Activated CD8-positive, alpha-beta T cell treated with anti-CD3 and anti-CD28 coated beads, Interleukin-2, amount 10 ng/mL, durations not matched to agents 7 days and 5 days (primary cell): ENCODE measurements at regions of chr9 and their contacts with region 1.

Region 1: DNA sequence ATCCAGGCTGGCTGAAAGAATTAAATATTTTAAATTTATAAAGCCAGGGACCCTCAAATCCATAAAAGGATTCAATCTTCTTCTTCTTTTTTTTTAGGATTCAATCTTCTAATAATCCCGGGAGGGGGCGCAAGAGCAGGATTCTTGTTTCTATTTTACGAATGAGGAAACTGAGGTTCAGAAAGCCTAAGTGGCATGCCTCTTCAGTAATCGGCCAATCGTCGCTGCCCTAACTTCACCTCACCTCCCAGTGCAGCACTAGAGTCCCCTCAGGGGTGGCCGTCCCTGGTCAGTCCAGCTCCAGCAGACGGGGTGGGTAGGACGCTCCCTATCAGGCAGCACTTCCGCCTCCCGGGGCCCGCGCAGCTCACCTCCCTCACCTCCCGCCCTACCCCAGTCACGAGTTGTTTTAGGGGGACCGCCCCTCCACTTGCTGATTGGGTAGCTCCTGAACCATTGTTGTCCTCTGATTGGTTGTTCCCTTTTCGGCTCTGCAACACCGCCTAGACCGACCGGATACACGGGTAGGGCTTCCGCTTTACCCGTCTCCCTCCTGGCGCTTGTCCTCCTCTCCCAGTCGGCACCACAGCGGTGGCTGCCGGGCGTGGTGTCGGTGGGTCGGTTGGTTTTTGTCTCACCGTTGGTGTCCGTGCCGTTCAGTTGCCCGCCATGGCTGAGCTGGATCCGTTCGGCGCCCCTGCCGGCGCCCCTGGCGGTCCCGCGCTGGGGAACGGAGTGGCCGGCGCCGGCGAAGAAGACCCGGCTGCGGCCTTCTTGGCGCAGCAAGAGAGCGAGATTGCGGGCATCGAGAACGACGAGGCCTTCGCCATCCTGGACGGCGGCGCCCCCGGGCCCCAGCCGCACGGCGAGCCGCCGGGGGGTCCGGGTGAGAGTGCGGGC is at the start of gene CLTA:
- DNase-seq: peak; percentile 98
- ATAC-seq: peak; percentile 98
- H3K4me3 Mint-ChIP-seq: peak within 1 kb of the TSS; percentile 93
- H3K27ac Mint-ChIP-seq: peak within 1 kb of the TSS; percentile 91
- H3K4me1 Mint-ChIP-seq: peaks cover 55% of the 10 kb centered on the region
- H3K27me3 Mint-ChIP-seq: peaks cover 8% of the 10 kb centered on the region
- total RNA-seq, gene CLTA: 167 to 170 TPM

Region 2: GRCh38 chr9:36142510-36143244 is 48.0 kb before region 1 on chr9:
- CTCF ChIA-PET with region 1: interaction called, 8 read pairs
- POLR2A ChIA-PET with region 1: interaction called, 26 read pairs
- DNase-seq: no peak
- ATAC-seq: peak; percentile 16
- H3K4me3 Mint-ChIP-seq: peak overlapping the region; percentile 79
- H3K27ac Mint-ChIP-seq: peak overlapping the region; percentile 91
- H3K4me1 Mint-ChIP-seq: peaks cover 96% of the 10 kb centered on the region
- H3K27me3 Mint-ChIP-seq: peaks cover 3% of the 10 kb centered on the region

Region 3: DNA sequence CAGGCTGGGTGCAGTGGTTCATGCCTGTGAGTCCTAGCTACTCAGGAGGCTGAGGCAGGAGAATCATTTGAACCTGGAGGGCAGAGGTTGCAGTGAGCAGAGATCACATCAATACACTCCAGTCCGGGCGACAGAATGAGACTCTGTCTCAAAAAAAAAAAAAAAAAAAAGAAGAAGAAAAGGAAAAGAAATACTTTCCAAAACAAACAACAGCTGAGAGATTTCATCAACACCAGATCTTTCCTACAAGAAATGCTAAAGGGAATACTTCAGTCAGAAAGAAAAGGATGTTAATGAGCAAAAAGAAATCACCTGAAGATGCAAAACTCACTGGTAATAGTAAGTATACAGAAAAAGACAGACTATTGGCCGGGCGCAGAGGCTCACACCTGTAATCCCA is 13.1 kb before region 1 on chr9:
- CTCF ChIA-PET with region 1: interaction called, 18 read pairs
- POLR2A ChIA-PET with region 1: interaction called, 4 read pairs
- DNase-seq: no peak
- ATAC-seq: no peak
- H3K4me3 Mint-ChIP-seq: no peak overlapping the region
- H3K27ac Mint-ChIP-seq: no peak overlapping the region
- H3K4me1 Mint-ChIP-seq: peaks cover 19% of the 10 kb centered on the region
- H3K27me3 Mint-ChIP-seq: peaks cover 21% of the 10 kb centered on the region

Region 4: GRCh38 chr9:36204906-36205547 is 14.4 kb after region 1 on chr9:
- CTCF ChIA-PET with region 1: interaction called, 12 read pairs
- POLR2A ChIA-PET with region 1: interaction called, 22 read pairs
- DNase-seq: no peak
- ATAC-seq: no peak
- H3K4me3 Mint-ChIP-seq: no peak overlapping the region
- H3K27ac Mint-ChIP-seq: no peak overlapping the region
- H3K4me1 Mint-ChIP-seq: peaks cover 51% of the 10 kb centered on the region
- H3K27me3 Mint-ChIP-seq: no peaks in the 10 kb centered on the region

Region 5: DNA sequence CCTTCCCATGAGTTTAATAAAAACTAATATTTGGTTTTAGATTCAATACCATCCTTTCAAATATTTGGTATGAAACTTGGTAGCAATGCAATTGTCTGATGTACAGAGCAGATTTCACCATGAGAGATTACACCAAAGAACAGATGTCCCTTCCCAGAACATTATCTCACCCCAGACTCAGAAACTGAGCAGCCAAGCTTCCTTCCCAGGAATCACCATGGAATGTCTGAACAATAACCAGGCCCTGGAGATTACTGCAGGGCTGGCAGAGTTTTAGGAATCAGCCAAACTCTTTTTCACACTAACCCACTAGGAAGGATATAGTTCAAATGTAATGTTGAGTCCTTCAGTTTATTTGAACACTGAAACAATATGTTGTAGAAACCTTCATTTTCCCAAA is 23.9 kb after region 1 on chr9:
- CTCF ChIA-PET with region 1: interaction called, 12 read pairs
- POLR2A ChIA-PET with region 1: interaction called, 3 read pairs
- DNase-seq: no peak
- ATAC-seq: no peak
- H3K4me3 Mint-ChIP-seq: no peak overlapping the region
- H3K27ac Mint-ChIP-seq: no peak overlapping the region
- H3K4me1 Mint-ChIP-seq: peaks cover 59% of the 10 kb centered on the region
- H3K27me3 Mint-ChIP-seq: no peaks in the 10 kb centered on the region

Region 6: GRCh38 chr9:36258208-36258988 is 67.8 kb after region 1 on chr9 and contains the start of gene GNE:
- CTCF ChIA-PET with region 1: interaction called, 5 read pairs
- POLR2A ChIA-PET with region 1: interaction called, 15 read pairs
- DNase-seq: peak; percentile 98
- ATAC-seq: peak; percentile 87
- H3K4me3 Mint-ChIP-seq: peak within 1 kb of the TSS; percentile 97
- H3K27ac Mint-ChIP-seq: peak within 1 kb of the TSS; percentile 96
- H3K4me1 Mint-ChIP-seq: peaks cover 15% of the 10 kb centered on the region
- H3K27me3 Mint-ChIP-seq: no peaks in the 10 kb centered on the region
- total RNA-seq, gene GNE: 15.2 to 16.1 TPM

Region 7: DNA sequence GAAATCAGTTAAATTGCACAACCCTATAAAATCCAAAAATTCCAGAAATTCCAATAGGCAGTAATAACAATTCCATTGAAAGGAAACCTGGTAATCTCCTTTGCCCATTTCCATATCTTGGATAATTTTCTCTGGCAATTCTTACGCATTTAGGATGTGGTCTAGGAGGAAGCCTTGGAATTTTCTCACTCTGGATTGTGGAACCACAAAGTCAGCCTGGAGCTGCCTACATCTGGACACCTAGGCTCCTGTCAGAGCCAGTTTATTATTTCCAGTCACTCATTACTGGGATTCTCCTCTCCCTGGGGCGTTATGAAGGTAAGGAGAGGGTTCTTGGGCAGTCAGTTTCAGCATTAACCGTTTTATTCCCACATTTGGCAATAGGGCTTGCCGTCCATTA is 107.9 kb after region 1 on chr9:
- CTCF ChIA-PET with region 1: no interaction called
- POLR2A ChIA-PET with region 1: no interaction called
- DNase-seq: no peak
- ATAC-seq: no peak
- H3K4me3 Mint-ChIP-seq: no peak overlapping the region
- H3K27ac Mint-ChIP-seq: no peak overlapping the region
- H3K4me1 Mint-ChIP-seq: no peaks in the 10 kb centered on the region
- H3K27me3 Mint-ChIP-seq: no peaks in the 10 kb centered on the region

Region 8: DNA sequence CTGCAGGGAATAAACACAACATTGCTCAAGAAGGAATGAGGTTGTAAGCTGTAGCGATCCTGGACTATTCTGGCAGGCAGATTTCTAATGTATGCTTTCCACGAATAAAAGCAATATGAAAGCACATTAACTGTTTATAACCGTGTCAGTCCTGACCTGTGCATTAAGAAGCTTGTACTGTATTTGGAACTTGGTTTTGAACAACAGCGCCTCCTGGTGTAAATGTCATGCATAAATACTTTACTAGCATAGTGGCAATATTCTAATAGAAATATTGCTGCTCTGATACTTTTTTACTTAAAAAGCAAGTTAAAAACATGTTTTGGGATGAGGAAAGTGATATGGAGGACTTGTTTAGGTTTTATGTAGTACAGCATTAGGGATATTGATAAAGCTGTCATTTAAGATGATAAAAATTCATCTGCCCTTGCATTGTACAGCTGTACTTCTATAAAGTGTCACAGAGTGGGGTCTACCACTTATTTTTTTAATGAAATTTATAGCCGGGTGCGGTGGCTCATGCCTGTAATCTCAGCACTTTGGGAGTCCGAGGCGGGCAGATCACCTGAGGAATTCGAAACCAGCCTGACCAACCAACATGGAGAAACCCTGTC is 138.3 kb after region 1 on chr9:
- CTCF ChIA-PET with region 1: interaction called, 15 read pairs
- POLR2A ChIA-PET with region 1: no interaction called
- DNase-seq: peak; percentile 75
- ATAC-seq: peak; percentile 57
- H3K4me3 Mint-ChIP-seq: no peak overlapping the region
- H3K27ac Mint-ChIP-seq: no peak overlapping the region
- H3K4me1 Mint-ChIP-seq: peaks cover 2% of the 10 kb centered on the region
- H3K27me3 Mint-ChIP-seq: no peaks in the 10 kb centered on the region

Region 9: DNA sequence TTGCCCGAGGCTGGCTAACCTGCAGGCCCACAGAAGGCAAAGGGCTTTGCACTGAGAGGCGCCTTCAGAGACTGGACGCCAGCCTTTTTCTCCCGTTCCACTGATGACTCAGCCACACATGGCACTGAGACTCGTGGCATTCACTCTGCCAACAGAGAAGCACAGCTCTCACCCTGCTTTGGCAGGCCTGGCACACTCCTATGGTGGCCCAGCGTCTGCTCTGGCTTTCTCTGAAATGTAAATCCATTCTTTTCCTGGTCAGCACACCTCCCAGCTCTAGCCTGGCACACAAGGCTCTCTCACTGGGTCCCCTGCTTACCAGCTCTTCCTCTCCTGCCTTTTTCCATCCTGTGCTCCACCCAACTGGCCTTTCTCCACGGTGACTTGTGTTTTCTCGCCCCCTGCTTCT is 376.2 kb after region 1 on chr9:
- CTCF ChIA-PET with region 1: no interaction called
- POLR2A ChIA-PET with region 1: no interaction called
- DNase-seq: no peak
- ATAC-seq: no peak
- H3K4me3 Mint-ChIP-seq: no peak overlapping the region
- H3K27ac Mint-ChIP-seq: no peak overlapping the region
- H3K4me1 Mint-ChIP-seq: peaks cover 5% of the 10 kb centered on the region
- H3K27me3 Mint-ChIP-seq: peaks cover 12% of the 10 kb centered on the region